ENCODE measurements at regions of chr10 and their contacts with region 1.

Region 1: GRCh38 chr10:12264204-12264940 is 68.4 kb downstream of the CDC123 start:
- DNase-seq: peak; percentile 85
- H3K4me3 ChIP-seq: peak overlapping the region; percentile 15 to 45 (median 40)
- H3K27ac ChIP-seq: peak overlapping the region; percentile 53 to 77 (median 73)
- H3K4me1 ChIP-seq: peaks cover 0 to 16% (median 5%) of the 10 kb centered on the region in 4 donors
- H3K27me3 ChIP-seq: no peaks in the 10 kb centered on the region
- CTCF ChIP-seq: peak; percentile 74 to 91 (median 78)
- EP300 ChIP-seq: no peak
- POLR2A ChIP-seq: no peak

Region 2: GRCh38 chr10:12348870-12349628 is 84.7 kb after region 1 on chr10 and contains the start of gene CAMK1D:
- intact Hi-C with region 1: loop called (anchors 2 kb)
- DNase-seq: peak; percentile 94
- H3K4me3 ChIP-seq: peak within 1 kb of the TSS; percentile 85 to 96 (median 90)
- H3K27ac ChIP-seq: peak within 1 kb of the TSS; percentile 93 to 97 (median 95)
- H3K4me1 ChIP-seq: peaks cover 0 to 22% (median 16%) of the 10 kb centered on the region in 4 donors
- H3K27me3 ChIP-seq: no peaks in the 10 kb centered on the region
- CTCF ChIP-seq: peak in 1 of 4 experiments; percentile 41
- EP300 ChIP-seq: no peak
- POLR2A ChIP-seq: peak in 1 of 2 donors; percentile 24
- total RNA-seq, gene CAMK1D: 7.2 to 10.2 (median 8.7) TPM

Region 3: DNA sequence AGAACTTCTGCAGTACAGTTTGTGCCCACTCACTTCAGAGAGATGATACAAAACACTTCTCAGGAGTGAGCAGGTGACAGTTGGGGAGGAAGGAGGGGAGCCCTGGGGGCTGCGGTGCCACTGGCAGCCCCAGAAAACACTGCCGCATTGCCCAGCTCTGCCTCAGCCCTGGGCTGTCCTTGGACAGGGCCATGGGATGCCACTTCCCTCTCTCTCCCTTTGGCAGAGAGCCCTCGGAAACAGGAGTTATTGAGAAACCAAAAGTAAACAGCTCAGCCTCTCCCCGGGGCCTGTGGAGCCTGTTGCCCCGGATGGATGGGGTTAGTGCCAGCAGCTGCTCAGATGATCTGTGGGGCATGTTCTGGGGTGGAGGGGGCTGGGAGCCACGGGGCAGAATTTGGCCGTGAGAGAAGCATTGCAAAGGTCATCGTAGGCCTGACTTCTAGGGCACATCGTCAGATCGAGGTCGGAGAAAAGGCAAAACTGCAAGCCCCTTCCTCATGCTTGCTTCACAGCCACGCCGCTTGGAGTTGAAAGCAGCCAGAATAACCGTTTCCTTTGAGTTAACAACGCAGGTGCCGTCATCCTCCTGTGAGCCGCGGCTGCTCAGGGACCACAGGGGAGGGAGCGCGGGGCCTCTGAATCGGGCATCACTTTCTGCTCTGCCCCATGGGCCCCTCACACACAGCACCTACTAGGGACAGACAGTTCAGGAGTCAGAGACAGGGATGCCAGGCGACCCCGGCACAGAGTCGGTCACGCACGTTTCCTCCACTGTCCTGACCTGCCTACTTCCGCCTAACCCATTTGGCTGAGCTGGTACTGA is 341.4 kb after region 1 on chr10:
- intact Hi-C with region 1: loop called (anchors 5 kb)
- DNase-seq: peak; percentile 95
- H3K4me3 ChIP-seq: peak overlapping the region; percentile 20 to 46 (median 40)
- H3K27ac ChIP-seq: peak overlapping the region; percentile 83 to 86 (median 85)
- H3K4me1 ChIP-seq: peaks cover 0 to 47% (median 27%) of the 10 kb centered on the region in 4 donors
- H3K27me3 ChIP-seq: no peaks in the 10 kb centered on the region
- CTCF ChIP-seq: no peak
- EP300 ChIP-seq: peak in 1 of 4 donors; percentile 39
- POLR2A ChIP-seq: no peak

Region 4: DNA sequence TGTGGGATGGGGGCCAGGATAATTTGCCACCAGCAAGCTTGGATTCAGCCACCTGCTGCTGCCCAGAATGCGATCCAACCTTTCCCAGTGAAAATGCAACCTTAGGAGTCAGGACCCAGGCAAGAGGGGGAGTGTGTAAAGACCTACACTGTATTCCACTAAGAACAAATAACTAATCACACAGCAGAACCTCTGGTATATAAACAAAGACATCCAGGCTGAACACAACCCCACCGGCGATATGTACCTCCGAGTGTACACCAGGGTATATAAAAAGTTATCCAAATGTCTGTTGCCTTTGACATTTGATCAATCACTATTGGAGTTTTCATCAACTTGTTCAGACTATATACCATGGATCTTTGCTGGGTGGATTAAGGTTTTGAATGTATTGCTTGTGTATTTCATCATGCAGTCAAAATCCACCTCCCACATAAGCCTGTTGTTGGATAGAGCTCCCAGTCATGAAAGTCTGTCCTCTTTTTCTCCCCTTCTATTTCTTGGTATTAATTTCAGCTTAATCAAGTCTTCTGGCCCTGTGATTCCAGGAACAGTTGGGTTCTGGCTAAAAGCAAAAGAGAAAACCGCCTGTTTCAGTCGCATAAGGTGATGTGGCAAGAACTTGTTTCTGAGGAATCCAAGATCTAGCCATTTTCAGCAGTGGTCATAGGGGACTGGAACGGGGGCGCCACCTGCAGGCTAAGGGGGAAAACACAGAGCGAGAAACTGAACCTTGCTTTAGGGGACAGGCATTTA is 446.4 kb after region 1 on chr10:
- intact Hi-C with region 1: loop called (anchors 1 kb)
- DNase-seq: peak; percentile 88
- H3K4me3 ChIP-seq: no peak overlapping the region
- H3K27ac ChIP-seq: peak overlapping the region; percentile 81 to 90 (median 86)
- H3K4me1 ChIP-seq: peaks cover 0 to 57% (median 51%) of the 10 kb centered on the region in 4 donors
- H3K27me3 ChIP-seq: no peaks in the 10 kb centered on the region
- CTCF ChIP-seq: peak; percentile 89 to 96 (median 90)
- EP300 ChIP-seq: no peak
- POLR2A ChIP-seq: no peak

Region 5: DNA sequence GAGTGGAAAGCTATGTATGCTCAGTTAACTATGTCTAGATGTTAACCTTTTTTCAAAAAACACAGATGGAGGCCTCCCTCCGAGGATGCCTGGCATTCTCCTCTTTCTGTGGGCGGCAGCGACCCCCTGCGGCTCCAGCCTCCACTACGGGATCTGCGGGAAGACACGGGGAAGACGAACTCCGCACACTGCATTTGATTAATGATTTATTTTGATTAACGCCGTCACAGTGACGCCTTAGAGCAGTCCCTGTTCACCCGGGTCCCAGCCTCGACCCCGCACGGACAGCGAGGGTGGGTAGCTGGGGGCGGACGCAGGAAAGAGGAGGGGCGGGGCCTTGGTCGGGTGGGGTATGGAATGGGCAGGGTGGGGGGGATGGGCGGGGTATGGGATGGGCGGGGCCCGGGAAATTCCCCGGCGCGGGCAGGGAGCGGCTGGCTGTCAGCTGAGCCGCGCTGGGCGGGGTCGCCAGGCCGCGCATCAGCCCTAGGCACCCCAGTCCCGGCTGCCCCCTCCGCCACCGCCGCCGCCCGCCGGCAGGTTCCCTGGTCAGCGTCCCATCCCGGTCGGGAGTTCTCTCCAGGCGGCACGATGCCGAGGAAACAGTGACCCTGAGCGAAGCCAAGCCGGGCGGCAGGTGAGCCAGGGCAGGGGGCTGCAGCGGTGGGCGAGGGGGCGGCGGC is 835.4 kb after region 1 on chr10 and contains the start of gene OPTN:
- intact Hi-C with region 1: loop called (anchors 10 kb)
- DNase-seq: peak; percentile 89
- H3K4me3 ChIP-seq: peak within 1 kb of the TSS; percentile 73 to 94 (median 94)
- H3K27ac ChIP-seq: peak within 1 kb of the TSS; percentile 93 to 97 (median 95)
- H3K4me1 ChIP-seq: peaks cover 0 to 29% (median 22%) of the 10 kb centered on the region in 4 donors
- H3K27me3 ChIP-seq: no peaks in the 10 kb centered on the region
- CTCF ChIP-seq: peak; percentile 57 to 68 (median 58)
- EP300 ChIP-seq: peak in 1 of 4 donors; percentile 5
- POLR2A ChIP-seq: peak in 1 of 2 donors; percentile 44
- total RNA-seq, gene OPTN: 53.5 to 72.6 (median 59.7) TPM